Calu3 (cell line): ENCODE measurements at regions of chr7 and their contacts with region 1.

Region 1: GRCh38 chr7:130069978-130070860 is at the start of gene KLHDC10:
- DNase-seq: peak; percentile 96
- H3K4me3 Mint-ChIP-seq: peak within 1 kb of the TSS; percentile 80
- H3K27ac Mint-ChIP-seq: peak within 1 kb of the TSS; percentile 92
- H3K4me1 Mint-ChIP-seq: peaks cover 27% of the 10 kb centered on the region
- H3K27me3 Mint-ChIP-seq: no peaks in the 10 kb centered on the region
- CTCF ChIP-seq: no peak
- total RNA-seq, gene KLHDC10: 28.5 and 35.3 TPM in 2 replicates

Region 2: GRCh38 chr7:129721068-129721467 is 349.2 kb before region 1 on chr7:
- CTCF ChIA-PET with region 1: no interaction called
- intact Hi-C with region 1: no loop called
- DNase-seq: no peak
- H3K4me3 Mint-ChIP-seq: no peak overlapping the region
- H3K27ac Mint-ChIP-seq: no peak overlapping the region
- H3K4me1 Mint-ChIP-seq: no peaks in the 10 kb centered on the region
- H3K27me3 Mint-ChIP-seq: no peaks in the 10 kb centered on the region
- CTCF ChIP-seq: no peak

Region 3: GRCh38 chr7:130084037-130084875 is 14.0 kb after region 1 on chr7:
- CTCF ChIA-PET with region 1: interaction called, 10 read pairs
- intact Hi-C with region 1: no loop called
- DNase-seq: no peak
- H3K4me3 Mint-ChIP-seq: no peak overlapping the region
- H3K27ac Mint-ChIP-seq: no peak overlapping the region
- H3K4me1 Mint-ChIP-seq: peaks cover 29% of the 10 kb centered on the region
- H3K27me3 Mint-ChIP-seq: no peaks in the 10 kb centered on the region
- CTCF ChIP-seq: no peak

Region 4: GRCh38 chr7:130154501-130155317 is 84.5 kb after region 1 on chr7:
- CTCF ChIA-PET with region 1: interaction called, 7 read pairs
- intact Hi-C with region 1: loop called (anchors 5 kb)
- DNase-seq: no peak
- H3K4me3 Mint-ChIP-seq: no peak overlapping the region
- H3K27ac Mint-ChIP-seq: no peak overlapping the region
- H3K4me1 Mint-ChIP-seq: no peaks in the 10 kb centered on the region
- H3K27me3 Mint-ChIP-seq: no peaks in the 10 kb centered on the region
- CTCF ChIP-seq: no peak

Region 5: GRCh38 chr7:130486114-130486958 is 416.1 kb after region 1 on chr7:
- CTCF ChIA-PET with region 1: no interaction called
- intact Hi-C with region 1: loop called (anchors 10 kb)
- DNase-seq: peak; percentile 87
- H3K4me3 Mint-ChIP-seq: peak overlapping the region; percentile 89
- H3K27ac Mint-ChIP-seq: peak overlapping the region; percentile 43
- H3K4me1 Mint-ChIP-seq: peaks cover 46% of the 10 kb centered on the region
- H3K27me3 Mint-ChIP-seq: peaks cover 8% of the 10 kb centered on the region
- CTCF ChIP-seq: peak; percentile 87

Region 6: GRCh38 chr7:130758429-130759056 is 688.3 kb after region 1 on chr7:
- CTCF ChIA-PET with region 1: interaction called, 6 read pairs
- intact Hi-C with region 1: loop called (anchors 10 kb)
- DNase-seq: no peak
- H3K4me3 Mint-ChIP-seq: no peak overlapping the region
- H3K27ac Mint-ChIP-seq: no peak overlapping the region
- H3K4me1 Mint-ChIP-seq: no peaks in the 10 kb centered on the region
- H3K27me3 Mint-ChIP-seq: peaks cover 60% of the 10 kb centered on the region
- CTCF ChIP-seq: peak; percentile 17

Region 7: GRCh38 chr7:131327626-131328376 is 1257.6 kb after region 1 on chr7 and contains the start of gene MKLN1:
- CTCF ChIA-PET with region 1: no interaction called
- intact Hi-C with region 1: no loop called
- DNase-seq: peak; percentile 93
- H3K4me3 Mint-ChIP-seq: peak within 1 kb of the TSS; percentile 99
- H3K27ac Mint-ChIP-seq: peak within 1 kb of the TSS; percentile 98
- H3K4me1 Mint-ChIP-seq: peaks cover 48% of the 10 kb centered on the region
- H3K27me3 Mint-ChIP-seq: no peaks in the 10 kb centered on the region
- CTCF ChIP-seq: no peak
- total RNA-seq, gene MKLN1: 36.8 and 47.1 TPM in 2 replicates